MCF 10A (cell line): ENCODE measurements at regions of chr12 and their contacts with region 1.

Region 1: DNA sequence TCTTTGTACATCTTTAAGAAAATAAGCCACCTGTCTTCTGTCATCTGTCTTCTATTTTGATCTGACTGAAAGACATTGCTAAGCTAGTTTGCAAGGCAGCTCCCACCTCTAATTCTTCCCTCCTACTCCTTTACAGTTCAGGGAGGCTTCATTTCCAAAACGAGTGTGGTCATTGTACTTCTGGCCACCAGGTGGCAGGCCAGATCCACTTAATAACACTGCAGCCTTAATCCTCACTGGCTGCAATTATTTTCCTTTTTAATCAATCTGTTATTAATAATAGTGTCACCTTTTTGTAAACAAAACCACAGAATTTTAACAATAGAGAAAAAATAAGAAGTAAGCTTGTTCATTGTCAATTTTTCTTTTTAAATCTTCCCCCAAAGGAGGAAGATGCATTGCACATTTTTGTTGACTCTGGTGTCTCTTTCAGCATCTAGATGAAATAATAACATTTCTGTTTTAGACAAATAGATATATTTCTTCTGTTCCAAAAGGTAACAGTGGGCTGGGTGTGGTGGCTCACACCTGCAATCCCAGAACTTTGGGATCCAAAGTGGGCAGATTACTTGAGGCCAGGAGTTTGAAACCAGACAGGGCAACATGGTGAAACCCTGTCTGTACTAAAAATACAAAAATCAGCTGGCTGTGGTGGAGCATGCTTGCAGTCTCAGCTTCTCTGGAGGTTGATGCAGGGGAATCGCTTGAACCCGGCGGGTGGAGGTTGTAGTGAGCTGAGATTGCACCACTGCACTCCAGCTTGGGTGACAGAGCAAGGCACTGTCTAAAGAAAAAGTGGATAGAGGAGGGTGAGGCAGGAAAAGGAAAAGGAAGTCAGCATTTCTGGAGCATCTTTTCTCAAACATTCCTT is 23.3 kb downstream of the GABARAPL1 start:
- DNase-seq: peak; percentile 53
- H3K4me3 Mint-ChIP-seq: no peak overlapping the region
- H3K27ac Mint-ChIP-seq: no peak overlapping the region
- H3K4me1 Mint-ChIP-seq: peaks cover 17% of the 10 kb centered on the region
- H3K27me3 Mint-ChIP-seq: no peaks in the 10 kb centered on the region
- CTCF ChIP-seq: peak; percentile 68

Region 2: DNA sequence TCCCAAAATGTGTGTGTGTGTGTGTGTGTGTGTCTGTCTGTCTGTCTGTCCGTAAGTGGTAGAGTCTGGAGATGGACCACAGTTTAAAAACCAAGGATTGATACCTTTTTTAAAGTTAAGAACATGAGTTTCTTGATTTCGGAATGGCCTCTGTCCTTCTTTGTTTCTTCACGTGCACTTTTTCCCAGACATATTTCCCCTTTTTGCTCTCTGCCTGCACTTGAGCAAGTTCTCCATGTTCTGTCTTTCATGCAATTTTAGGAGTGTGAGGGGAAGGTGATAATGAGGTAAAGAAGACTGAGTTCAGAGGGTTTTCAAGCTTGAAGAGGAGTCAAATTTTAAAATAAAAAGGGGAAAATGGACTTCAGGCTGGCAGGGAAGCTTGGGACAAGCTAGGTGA is 76.7 kb before region 1 on chr12:
- CTCF ChIA-PET with region 1: no interaction called
- POLR2A ChIA-PET with region 1: no interaction called
- intact Hi-C with region 1: no loop called
- DNase-seq: no peak
- H3K4me3 Mint-ChIP-seq: no peak overlapping the region
- H3K27ac Mint-ChIP-seq: no peak overlapping the region
- H3K4me1 Mint-ChIP-seq: peaks cover 7% of the 10 kb centered on the region
- H3K27me3 Mint-ChIP-seq: no peaks in the 10 kb centered on the region
- CTCF ChIP-seq: no peak

Region 3: GRCh38 chr12:10220398-10221077 is 15.5 kb before region 1 on chr12:
- CTCF ChIA-PET with region 1: interaction called, 18 read pairs
- POLR2A ChIA-PET with region 1: no interaction called
- intact Hi-C with region 1: no loop called
- DNase-seq: peak; percentile 79
- H3K4me3 Mint-ChIP-seq: no peak overlapping the region
- H3K27ac Mint-ChIP-seq: no peak overlapping the region
- H3K4me1 Mint-ChIP-seq: peaks cover 8% of the 10 kb centered on the region
- H3K27me3 Mint-ChIP-seq: no peaks in the 10 kb centered on the region
- CTCF ChIP-seq: no peak

Region 4: DNA sequence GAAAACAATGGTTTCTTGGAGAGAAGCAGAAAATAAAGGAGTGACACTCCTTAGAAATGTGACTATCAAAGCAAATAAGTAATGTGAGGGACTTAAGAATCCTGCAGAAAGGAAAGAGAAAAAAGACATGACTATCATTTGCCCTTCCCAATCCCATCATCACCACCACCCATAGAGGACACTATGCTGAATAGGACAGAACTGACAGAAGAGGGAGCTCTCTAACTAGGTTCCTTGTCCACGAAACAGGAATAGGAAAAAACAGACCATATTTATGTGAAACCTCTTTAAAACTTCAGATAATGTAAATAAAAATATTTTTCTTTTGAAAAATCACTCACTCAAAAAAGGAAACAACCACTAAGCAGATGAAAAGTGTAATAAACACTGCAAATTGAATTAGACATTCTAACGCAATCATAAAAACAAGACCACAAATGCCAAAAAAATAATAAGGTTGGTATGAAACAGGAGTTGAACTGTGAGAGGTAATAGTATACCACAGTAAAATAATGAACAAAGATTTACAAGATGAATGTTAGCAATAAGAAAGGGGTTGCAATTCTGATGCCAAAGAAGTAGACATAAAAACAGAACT is 95.7 kb after region 1 on chr12:
- CTCF ChIA-PET with region 1: interaction called, 20 read pairs
- POLR2A ChIA-PET with region 1: no interaction called
- intact Hi-C with region 1: loop called (anchors 1 kb)
- DNase-seq: peak; percentile 72
- H3K4me3 Mint-ChIP-seq: no peak overlapping the region
- H3K27ac Mint-ChIP-seq: no peak overlapping the region
- H3K4me1 Mint-ChIP-seq: peaks cover 22% of the 10 kb centered on the region
- H3K27me3 Mint-ChIP-seq: no peaks in the 10 kb centered on the region
- CTCF ChIP-seq: peak; percentile 63

Region 5: DNA sequence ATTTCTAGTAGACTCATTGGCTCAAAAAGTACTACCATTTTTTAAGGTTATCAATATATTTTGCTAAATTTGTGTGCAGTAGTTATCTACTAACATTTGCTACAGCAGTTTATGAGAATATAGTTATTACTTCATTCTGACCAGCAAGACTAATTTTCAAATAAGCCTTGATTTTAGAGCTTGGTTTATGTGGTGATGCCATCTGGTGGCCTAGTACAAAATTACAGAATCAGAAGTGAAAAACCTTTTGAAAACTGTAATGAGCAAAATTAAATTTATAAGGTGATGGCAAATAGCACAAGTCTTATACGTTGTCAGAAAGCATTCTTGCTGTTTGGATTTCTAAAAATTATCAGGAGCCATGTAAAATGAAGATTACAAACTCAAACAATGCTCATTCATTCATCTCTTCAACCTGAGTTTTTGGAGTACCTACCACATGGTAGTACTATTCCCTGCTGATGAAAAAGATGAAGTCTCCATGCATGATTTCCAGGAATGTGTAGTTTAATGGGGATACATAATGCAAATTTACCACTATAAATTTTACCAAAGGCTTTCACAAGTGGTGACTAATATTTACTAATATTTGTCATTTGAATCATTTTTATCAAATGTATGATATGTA is 326.4 kb after region 1 on chr12:
- CTCF ChIA-PET with region 1: interaction called, 40 read pairs
- POLR2A ChIA-PET with region 1: no interaction called
- intact Hi-C with region 1: loop called (anchors 1 kb)
- DNase-seq: peak; percentile 61
- H3K4me3 Mint-ChIP-seq: no peak overlapping the region
- H3K27ac Mint-ChIP-seq: no peak overlapping the region
- H3K4me1 Mint-ChIP-seq: peaks cover 6% of the 10 kb centered on the region
- H3K27me3 Mint-ChIP-seq: no peaks in the 10 kb centered on the region
- CTCF ChIP-seq: peak; percentile 61

Region 6: DNA sequence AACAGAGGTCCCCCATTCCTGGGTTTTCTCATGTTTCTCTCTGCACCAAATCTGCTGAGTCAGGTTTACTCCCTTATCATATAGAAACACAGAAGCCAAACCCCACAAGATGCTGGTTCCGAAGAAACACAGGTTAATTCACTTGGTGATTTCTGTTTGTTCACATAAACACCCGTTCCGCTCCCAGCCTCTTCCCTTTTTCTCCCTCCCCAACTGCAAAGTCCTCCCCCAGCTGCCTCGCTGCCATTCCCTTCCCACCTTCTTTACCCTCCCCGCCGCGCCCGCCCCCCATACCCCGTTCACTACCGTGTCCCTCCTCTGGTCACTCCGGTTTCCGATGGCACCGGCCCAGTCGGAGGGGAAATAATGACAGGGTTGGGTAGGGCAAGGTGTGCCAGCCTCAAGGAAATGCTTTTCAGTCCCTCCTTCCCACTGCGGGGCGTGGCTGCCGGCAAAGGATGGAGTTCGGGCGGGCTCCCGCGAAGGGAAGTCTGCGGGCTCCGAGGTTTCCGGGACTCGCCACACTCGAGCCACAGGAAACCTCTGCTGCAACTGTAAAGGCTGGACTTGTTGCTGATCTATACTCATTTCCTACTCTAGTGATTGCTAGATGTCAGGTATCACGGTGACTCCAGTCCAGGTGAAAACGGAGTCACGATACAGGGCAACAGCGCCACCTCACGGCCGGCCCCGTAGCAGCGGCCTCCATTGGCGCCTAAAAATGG is 437.8 kb after region 1 on chr12 and contains the start of gene STYK1:
- CTCF ChIA-PET with region 1: interaction called, 10 read pairs
- POLR2A ChIA-PET with region 1: no interaction called
- intact Hi-C with region 1: loop called (anchors 1 kb)
- DNase-seq: peak; percentile 72
- H3K4me3 Mint-ChIP-seq: peak within 1 kb of the TSS; percentile 74
- H3K27ac Mint-ChIP-seq: no peak within 1 kb of the TSS
- H3K4me1 Mint-ChIP-seq: no peaks in the 10 kb centered on the region
- H3K27me3 Mint-ChIP-seq: no peaks in the 10 kb centered on the region
- CTCF ChIP-seq: peak; percentile 96
- total RNA-seq, gene STYK1: 0.14 and 0.56 TPM in 2 replicates